Activated naive CD4-positive, alpha-beta T cell treated with anti-CD3 and anti-CD28 coated beads for 36 hours (primary cell): ENCODE measurements at regions of chr2 and their contacts with region 1.

Region 1: DNA sequence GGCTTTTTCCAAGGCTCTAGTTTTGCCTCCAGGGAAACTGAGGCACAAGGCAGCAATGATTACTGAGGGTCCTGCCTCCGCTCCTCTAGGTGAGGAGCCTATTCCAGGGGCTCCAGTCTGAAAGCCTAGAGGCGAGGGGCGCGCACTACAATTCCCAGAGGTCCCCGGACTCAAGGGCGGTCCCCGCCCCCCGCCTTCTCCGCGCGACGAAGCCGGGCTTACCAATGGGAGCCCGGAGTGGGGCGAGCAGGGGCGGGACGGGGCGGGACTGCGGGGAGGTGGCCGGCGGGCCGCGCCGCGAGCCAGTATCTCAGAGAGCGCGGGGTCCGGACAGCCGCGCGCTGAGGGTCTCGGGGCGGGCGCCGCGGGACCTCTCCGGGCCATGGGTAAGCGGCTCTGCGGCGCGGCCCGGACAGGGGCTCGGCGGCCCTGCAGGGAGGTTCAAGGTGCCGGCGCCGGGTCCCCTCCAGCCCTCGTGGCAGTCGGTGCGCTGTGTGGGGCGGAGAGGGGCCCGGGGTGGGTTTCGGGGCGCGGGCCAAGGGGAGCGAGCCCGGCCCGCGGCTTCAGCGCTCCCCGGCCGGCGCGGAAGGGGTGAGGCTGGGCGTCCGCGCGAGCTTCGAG is at the start of gene ARID5A:
- DNase-seq: peak; percentile 96
- H3K4me3 Mint-ChIP-seq: peak within 1 kb of the TSS; percentile 96
- H3K27ac Mint-ChIP-seq: peak within 1 kb of the TSS; percentile 99
- H3K4me1 Mint-ChIP-seq: peaks cover 60% of the 10 kb centered on the region
- H3K27me3 Mint-ChIP-seq: no peaks in the 10 kb centered on the region
- total RNA-seq, gene ARID5A: 349 to 351 TPM

Region 2: DNA sequence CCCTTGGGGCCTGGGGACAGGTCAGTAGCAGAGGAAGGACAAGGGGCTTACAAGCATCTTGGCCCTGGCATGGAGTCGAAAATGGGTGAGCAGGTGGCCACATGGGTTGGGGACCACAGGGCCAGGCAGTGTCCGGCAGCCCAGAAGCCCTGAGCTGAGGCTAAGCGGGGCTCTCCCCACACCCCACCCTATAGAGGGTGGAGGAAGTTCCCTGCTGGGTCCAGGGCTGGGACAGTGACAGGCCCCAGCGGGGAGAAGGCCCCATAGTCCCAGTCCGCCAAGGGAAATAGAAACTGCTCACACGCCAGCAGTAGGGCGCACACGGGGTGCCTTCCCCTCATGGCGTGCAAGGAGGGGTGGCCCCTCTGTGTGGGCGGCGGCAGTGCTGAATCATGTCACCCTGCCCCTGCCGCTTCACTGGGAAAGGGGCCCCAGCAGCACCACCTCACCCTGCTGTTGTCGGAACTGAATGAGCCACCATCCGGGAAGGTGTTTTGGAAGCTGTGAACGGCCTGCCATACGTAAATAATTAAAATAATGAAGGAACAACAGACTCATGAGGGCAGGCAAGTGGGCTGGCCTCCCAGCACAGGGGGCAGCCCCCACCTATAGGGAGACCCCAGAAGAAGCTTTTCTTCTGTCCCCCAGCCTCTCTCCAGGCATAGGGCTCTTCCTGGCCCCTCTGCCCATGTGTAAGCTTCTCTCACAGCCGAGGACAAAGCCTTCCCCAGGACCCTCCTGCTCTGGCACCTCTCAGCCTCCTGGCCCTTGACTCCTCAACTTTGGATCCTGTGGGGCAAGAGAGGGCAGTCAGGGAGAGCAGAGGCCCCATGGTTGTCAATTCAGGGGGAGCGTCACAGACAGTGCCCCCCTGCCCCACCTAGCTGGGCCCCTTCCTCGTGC is 378.7 kb before region 1 on chr2:
- CTCF ChIA-PET with region 1: no interaction called
- intact Hi-C with region 1: loop called (anchors 1 kb)
- DNase-seq: peak; percentile 99
- H3K4me3 Mint-ChIP-seq: peak overlapping the region; percentile 75
- H3K27ac Mint-ChIP-seq: peak overlapping the region; percentile 95
- H3K4me1 Mint-ChIP-seq: peaks cover 85% of the 10 kb centered on the region
- H3K27me3 Mint-ChIP-seq: no peaks in the 10 kb centered on the region

Region 3: GRCh38 chr2:96554293-96555145 is 18.0 kb after region 1 on chr2:
- CTCF ChIA-PET with region 1: interaction called, 71 read pairs
- intact Hi-C with region 1: loop called (anchors 1 kb)
- DNase-seq: peak; percentile 73
- H3K4me3 Mint-ChIP-seq: peak overlapping the region; percentile 52
- H3K27ac Mint-ChIP-seq: peak overlapping the region; percentile 88
- H3K4me1 Mint-ChIP-seq: peaks cover 34% of the 10 kb centered on the region
- H3K27me3 Mint-ChIP-seq: no peaks in the 10 kb centered on the region